GM12878 (cell line): ENCODE measurements at regions of chr5 and their contacts with region 1.

Region 1: DNA sequence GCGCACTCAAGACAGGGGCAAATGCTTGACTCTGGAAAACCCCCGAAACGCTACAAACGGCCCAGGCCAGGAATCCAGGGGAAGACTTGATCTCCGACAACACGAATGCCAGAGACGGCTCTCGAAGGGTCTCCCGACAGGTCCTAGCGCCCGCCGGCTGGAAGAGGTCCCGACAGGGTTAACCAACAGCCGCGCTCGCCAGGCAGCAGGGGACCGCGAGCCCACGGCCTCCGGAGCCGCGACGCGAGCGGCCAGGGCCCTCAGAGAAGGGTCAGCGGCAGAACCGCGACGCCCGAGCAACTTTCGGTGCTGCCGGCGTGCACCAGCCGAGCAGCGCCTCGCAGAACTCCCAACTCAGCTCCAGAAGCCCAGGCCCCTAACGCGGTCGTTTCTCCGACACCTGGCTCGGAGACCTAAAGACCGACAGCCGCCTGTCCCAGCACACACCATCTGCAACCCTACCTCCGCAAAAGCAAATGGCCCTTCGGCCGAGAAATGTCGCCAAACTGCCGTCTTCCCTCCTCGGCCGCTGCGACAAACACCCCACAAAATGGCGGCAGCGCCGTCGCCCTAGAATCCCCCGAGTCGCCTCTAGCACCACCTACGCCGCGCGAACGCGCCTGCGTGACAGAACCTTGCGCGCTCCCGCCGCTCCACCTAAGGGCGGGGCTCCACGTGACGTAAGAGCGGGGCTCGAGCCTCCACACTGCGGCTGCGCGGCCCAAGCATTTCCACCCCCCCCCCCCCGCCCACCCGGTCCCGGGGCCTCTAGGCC is at the start of gene CLK4:
- DNase-seq: peak; percentile 71
- ATAC-seq: peak; percentile 89
- H3K4me3 ChIP-seq: peak within 1 kb of the TSS; percentile 79
- H3K27ac ChIP-seq: peak within 1 kb of the TSS; percentile 95
- H3K4me1 ChIP-seq: no peaks in the 10 kb centered on the region
- H3K27me3 ChIP-seq: no peaks in the 10 kb centered on the region
- CTCF ChIP-seq: no peak
- EP300 ChIP-seq: no peak
- POLR2A ChIP-seq: peak; percentile 94
- RAD21 ChIP-seq: no peak
- polyA plus RNA-seq, gene CLK4: 13.6 to 20.7 TPM

Region 2: DNA sequence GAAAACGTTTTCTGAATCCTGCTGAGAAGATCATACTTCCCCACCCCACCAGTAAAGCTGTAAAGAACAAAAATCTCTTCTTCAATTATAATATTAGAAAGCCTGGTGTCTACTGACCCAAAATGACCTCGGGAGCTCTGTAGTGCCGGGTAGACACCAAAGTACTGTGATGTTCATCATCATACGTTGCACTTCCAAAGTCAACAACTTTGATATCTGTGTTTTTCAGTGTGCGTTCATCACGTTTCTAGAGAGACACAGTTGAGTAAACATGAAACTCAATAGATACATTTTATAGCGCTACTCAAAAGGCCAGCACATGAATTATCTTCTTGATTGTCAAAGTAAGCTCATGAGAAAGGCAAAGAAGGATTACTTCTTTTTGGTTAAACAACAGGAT is 14.4 kb before region 1 on chr5:
- CTCF ChIA-PET with region 1: interaction called, 11 read pairs
- POLR2A ChIA-PET with region 1: interaction called, 8 read pairs
- RAD21 ChIA-PET with region 1: no interaction called
- SMC1A ChIA-PET with region 1: interaction called, 6 read pairs
- in situ Hi-C with region 1: no loop called
- intact Hi-C with region 1: no loop called
- DNase-seq: no peak
- ATAC-seq: no peak
- H3K4me3 ChIP-seq: no peak overlapping the region
- H3K27ac ChIP-seq: no peak overlapping the region
- H3K4me1 ChIP-seq: no peaks in the 10 kb centered on the region
- H3K27me3 ChIP-seq: no peaks in the 10 kb centered on the region
- CTCF ChIP-seq: no peak
- EP300 ChIP-seq: no peak
- POLR2A ChIP-seq: no peak
- RAD21 ChIP-seq: no peak

Region 3: GRCh38 chr5:178642351-178642971 is 15.8 kb after region 1 on chr5:
- CTCF ChIA-PET with region 1: interaction called, 3 read pairs
- POLR2A ChIA-PET with region 1: interaction called, 7 read pairs
- RAD21 ChIA-PET with region 1: interaction called, 7 read pairs
- SMC1A ChIA-PET with region 1: interaction called, 10 read pairs
- in situ Hi-C with region 1: no loop called
- intact Hi-C with region 1: no loop called
- DNase-seq: no peak
- ATAC-seq: no peak
- H3K4me3 ChIP-seq: no peak overlapping the region
- H3K27ac ChIP-seq: no peak overlapping the region
- H3K4me1 ChIP-seq: no peaks in the 10 kb centered on the region
- H3K27me3 ChIP-seq: no peaks in the 10 kb centered on the region
- CTCF ChIP-seq: no peak
- EP300 ChIP-seq: no peak
- POLR2A ChIP-seq: no peak
- RAD21 ChIP-seq: no peak

Region 4: DNA sequence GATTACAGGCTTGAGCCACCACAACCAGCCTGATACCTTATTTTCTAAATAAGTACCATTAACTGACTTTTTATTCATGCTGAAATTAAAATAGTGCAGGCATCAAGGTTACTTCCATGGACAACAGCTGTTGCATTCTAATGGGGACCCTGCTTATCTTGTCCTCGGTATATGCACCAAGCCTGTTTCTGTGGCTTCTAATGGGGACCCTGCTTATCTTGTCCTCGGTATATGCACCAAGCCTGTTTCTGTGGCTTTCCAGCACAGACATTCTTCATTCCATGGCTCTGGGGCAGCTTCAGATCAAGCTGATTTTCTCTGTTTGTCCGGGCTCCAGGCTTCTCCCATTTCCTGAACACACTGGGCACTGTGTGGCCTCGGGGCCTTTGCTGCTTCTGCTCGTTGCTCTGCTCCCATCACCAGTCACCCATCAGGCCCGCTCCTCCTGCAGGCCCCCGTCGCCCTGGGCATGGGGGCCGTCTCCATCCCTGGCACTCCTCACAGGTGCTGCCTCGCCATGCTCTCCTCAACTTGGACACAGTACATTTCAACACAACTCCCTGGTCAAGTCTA is 73.1 kb after region 1 on chr5:
- CTCF ChIA-PET with region 1: no interaction called
- POLR2A ChIA-PET with region 1: no interaction called
- RAD21 ChIA-PET with region 1: no interaction called
- SMC1A ChIA-PET with region 1: no interaction called
- in situ Hi-C with region 1: no loop called
- intact Hi-C with region 1: no loop called
- DNase-seq: no peak
- ATAC-seq: no peak
- H3K4me3 ChIP-seq: no peak overlapping the region
- H3K27ac ChIP-seq: no peak overlapping the region
- H3K4me1 ChIP-seq: no peaks in the 10 kb centered on the region
- H3K27me3 ChIP-seq: no peaks in the 10 kb centered on the region
- CTCF ChIP-seq: no peak
- EP300 ChIP-seq: no peak
- POLR2A ChIP-seq: no peak
- RAD21 ChIP-seq: no peak

Region 5: DNA sequence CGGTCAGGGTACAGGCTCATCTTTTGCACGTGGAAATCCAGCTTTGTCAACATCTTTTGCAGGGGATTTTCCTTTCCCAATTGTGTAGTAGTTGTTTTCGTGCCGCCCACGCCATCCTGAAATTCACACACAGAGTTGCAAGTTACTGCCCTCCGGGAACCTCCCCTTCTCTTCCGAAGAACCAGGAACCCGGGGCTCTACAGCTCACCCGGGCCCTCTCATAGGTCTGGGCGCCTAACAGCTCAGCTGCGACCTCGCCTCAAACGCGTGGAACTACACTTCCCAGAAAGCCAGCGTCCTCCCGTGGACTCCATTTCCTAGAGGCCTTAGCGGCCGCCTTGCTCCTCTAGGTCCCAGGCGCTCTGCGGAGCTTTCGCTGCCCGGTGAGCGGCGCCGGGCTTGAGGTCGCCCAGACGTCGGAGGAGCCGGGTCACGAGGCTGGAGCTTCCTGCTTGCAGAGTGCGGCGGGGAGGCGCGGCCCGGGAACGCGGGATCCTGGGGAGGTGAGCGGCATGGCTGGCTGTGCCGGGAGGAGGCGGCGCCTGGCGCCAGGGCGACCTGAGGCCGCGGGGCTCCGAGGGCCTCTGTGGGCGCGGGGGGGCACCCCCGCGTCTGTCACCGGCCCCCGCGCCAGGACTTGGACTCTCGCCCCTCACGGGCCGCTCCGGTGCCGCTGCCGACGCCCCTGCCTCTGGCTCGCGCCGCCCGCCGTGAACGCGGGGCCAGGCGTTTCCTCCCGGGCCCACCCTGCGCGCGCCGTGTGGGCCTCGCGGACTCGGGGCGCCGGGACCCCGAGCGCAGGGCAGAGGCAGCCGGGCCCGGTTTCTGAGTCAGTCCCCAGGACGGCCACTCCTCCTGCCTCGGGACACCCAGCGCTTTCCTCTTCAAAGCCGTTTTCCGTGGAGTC is 233.2 kb after region 1 on chr5 and contains the start of gene ZNF354B:
- CTCF ChIA-PET with region 1: no interaction called
- POLR2A ChIA-PET with region 1: no interaction called
- RAD21 ChIA-PET with region 1: no interaction called
- SMC1A ChIA-PET with region 1: interaction called, 3 read pairs
- in situ Hi-C with region 1: no loop called
- intact Hi-C with region 1: loop called (anchors 10 kb)
- DNase-seq: peak; percentile 76
- ATAC-seq: peak; percentile 98
- H3K4me3 ChIP-seq: peak within 1 kb of the TSS; percentile 73
- H3K27ac ChIP-seq: 0 out of 2 replicates have a peak within 1 kb of the TSS, but pooled peaks have one; percentile 4
- H3K4me1 ChIP-seq: no peaks in the 10 kb centered on the region
- H3K27me3 ChIP-seq: no peaks in the 10 kb centered on the region
- CTCF ChIP-seq: peak in 2 of 3 experiments; percentile 6 to 10; a peak in 1 of 6 replicates
- EP300 ChIP-seq: no peak
- POLR2A ChIP-seq: peak; percentile 87
- RAD21 ChIP-seq: no peak
- polyA plus RNA-seq, gene ZNF354B: 0.64 to 1.2 TPM

Region 6: GRCh38 chr5:179550511-179551230 is 924.0 kb after region 1 on chr5 and contains the start of gene RUFY1:
- CTCF ChIA-PET with region 1: no interaction called
- POLR2A ChIA-PET with region 1: no interaction called
- RAD21 ChIA-PET with region 1: no interaction called
- SMC1A ChIA-PET with region 1: no interaction called
- in situ Hi-C with region 1: loop called (anchors 10 kb)
- intact Hi-C with region 1: loop called (anchors 10 kb)
- DNase-seq: peak; percentile 20
- ATAC-seq: peak; percentile 81
- H3K4me3 ChIP-seq: peak within 1 kb of the TSS; percentile 67
- H3K27ac ChIP-seq: peak within 1 kb of the TSS; percentile 90
- H3K4me1 ChIP-seq: no peaks in the 10 kb centered on the region
- H3K27me3 ChIP-seq: no peaks in the 10 kb centered on the region
- CTCF ChIP-seq: no peak
- EP300 ChIP-seq: no peak
- POLR2A ChIP-seq: peak; percentile 89
- RAD21 ChIP-seq: no peak
- polyA plus RNA-seq, gene RUFY1: 5.7 to 8.1 TPM

Region 7: DNA sequence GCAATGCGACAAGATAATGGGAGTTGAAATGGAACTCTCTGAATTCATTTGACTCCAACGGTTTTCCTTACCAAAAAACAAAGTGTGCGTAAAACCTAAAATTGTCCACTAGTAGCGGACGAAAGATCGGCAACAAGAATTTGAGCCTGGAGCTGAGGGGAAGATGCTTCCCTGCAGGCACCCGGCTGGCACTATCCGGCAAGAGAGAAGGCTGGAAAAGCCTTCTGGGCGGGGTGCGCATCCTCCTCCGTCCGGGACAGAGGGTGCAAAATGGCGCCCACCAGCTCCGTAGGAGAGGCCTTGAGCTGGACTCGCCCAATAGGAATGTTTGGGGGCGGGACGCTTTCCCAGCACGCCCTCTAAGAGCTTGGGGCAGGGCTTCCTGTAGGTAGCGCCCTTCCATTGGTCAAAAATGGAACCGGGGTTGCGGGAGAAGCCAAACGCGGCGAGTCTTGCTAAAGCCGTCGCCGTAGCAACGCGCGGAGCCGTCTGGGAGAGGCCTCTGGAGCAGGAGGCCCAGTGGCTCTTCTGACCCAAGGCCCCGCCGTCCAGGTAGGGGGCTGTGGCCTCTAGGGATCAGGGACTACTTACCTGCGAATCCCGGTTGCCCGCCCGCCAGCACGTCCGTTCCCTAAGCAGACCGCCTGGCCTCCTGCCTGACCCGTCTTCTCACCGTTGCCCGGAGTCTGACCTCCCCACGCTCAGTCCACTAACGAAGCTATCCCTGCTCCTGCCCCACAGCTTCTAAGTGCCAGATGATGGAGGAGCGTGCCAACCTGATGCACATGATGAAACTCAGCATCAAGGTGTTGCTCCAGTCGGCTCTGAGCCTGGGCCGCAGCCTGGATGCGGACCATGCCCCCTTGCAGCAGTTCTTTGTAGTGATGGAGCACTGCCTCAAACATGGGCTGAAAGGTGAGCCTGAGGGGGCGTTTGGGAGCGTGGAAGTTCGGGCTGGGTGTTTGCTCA is 932.9 kb after region 1 on chr5:
- CTCF ChIA-PET with region 1: no interaction called
- POLR2A ChIA-PET with region 1: no interaction called
- RAD21 ChIA-PET with region 1: no interaction called
- SMC1A ChIA-PET with region 1: no interaction called
- in situ Hi-C with region 1: no loop called
- intact Hi-C with region 1: loop called (anchors 10 kb)
- DNase-seq: peak; percentile 80
- ATAC-seq: peak; percentile 100
- H3K4me3 ChIP-seq: peak overlapping the region; percentile 68
- H3K27ac ChIP-seq: peak overlapping the region; percentile 67
- H3K4me1 ChIP-seq: peaks cover 3% of the 10 kb centered on the region
- H3K27me3 ChIP-seq: no peaks in the 10 kb centered on the region
- CTCF ChIP-seq: no peak
- EP300 ChIP-seq: no peak
- POLR2A ChIP-seq: peak; percentile 93
- RAD21 ChIP-seq: no peak